Mammary epithelial cell (primary cell): ENCODE measurements at regions of chr6 and their contacts with region 1.

Region 1: GRCh38 chr6:34132486-34133185 is 13.3 kb downstream of the GRM4 start:
- DNase-seq: peak; percentile 23
- H3K4me3 ChIP-seq: no peak overlapping the region
- H3K27ac ChIP-seq: no peak overlapping the region
- H3K4me1 ChIP-seq: no peaks in the 10 kb centered on the region
- H3K27me3 ChIP-seq: no peaks in the 10 kb centered on the region
- CTCF ChIP-seq: no peak

Region 2: GRCh38 chr6:33720994-33721393 is 411.6 kb before region 1 on chr6:
- CTCF ChIA-PET with region 1: no interaction called
- dilution Hi-C with region 1: no loop called
- in situ Hi-C with region 1: no loop called
- intact Hi-C with region 1: no loop called
- DNase-seq: no peak
- H3K4me3 ChIP-seq: no peak overlapping the region
- H3K27ac ChIP-seq: no peak overlapping the region
- H3K4me1 ChIP-seq: peaks cover 24% of the 10 kb centered on the region
- H3K27me3 ChIP-seq: peaks cover 1% of the 10 kb centered on the region
- CTCF ChIP-seq: no peak

Region 3: GRCh38 chr6:33788694-33789549 is 343.7 kb before region 1 on chr6 and contains the start of gene LEMD2:
- CTCF ChIA-PET with region 1: no interaction called
- dilution Hi-C with region 1: no loop called
- in situ Hi-C with region 1: no loop called
- intact Hi-C with region 1: loop called (anchors 5 kb)
- DNase-seq: peak; percentile 88
- H3K4me3 ChIP-seq: peak within 1 kb of the TSS; percentile 71 to 79 (median 76)
- H3K27ac ChIP-seq: peak within 1 kb of the TSS; percentile 73
- H3K4me1 ChIP-seq: peaks cover 25% of the 10 kb centered on the region
- H3K27me3 ChIP-seq: no peaks in the 10 kb centered on the region
- CTCF ChIP-seq: no peak
- total RNA-seq, gene LEMD2: 47.5 to 63.2 TPM

Region 4: GRCh38 chr6:34094474-34095135 is 38.0 kb before region 1 on chr6:
- CTCF ChIA-PET with region 1: no interaction called
- dilution Hi-C with region 1: loop called (anchors 5 kb)
- in situ Hi-C with region 1: no loop called
- intact Hi-C with region 1: no loop called
- DNase-seq: no peak
- H3K4me3 ChIP-seq: no peak overlapping the region
- H3K27ac ChIP-seq: no peak overlapping the region
- H3K4me1 ChIP-seq: no peaks in the 10 kb centered on the region
- H3K27me3 ChIP-seq: no peaks in the 10 kb centered on the region
- CTCF ChIP-seq: no peak

Region 5: DNA sequence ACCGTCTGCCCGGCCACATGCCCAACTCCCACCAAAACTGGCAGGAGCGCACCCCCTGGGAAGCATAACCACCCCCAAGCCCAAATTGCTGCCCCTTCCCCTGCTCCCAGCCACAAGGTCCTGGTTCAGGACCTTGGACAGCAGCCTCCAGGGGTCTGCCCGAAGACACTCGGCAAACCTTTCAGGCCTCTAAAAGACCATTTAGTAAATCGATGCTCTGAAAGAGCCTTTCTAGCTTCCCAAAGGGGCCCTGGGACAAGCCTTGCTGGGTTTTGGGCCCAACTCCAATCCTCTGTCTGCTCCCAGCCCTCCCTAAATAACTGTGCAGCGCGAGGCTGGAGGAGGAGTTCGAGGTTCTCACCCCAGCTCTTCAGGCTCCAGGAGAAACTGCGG is 17.2 kb before region 1 on chr6:
- CTCF ChIA-PET with region 1: no interaction called
- dilution Hi-C with region 1: no loop called
- in situ Hi-C with region 1: no loop called
- intact Hi-C with region 1: loop called (anchors 2 kb)
- DNase-seq: no peak
- H3K4me3 ChIP-seq: no peak overlapping the region
- H3K27ac ChIP-seq: no peak overlapping the region
- H3K4me1 ChIP-seq: no peaks in the 10 kb centered on the region
- H3K27me3 ChIP-seq: peaks cover 4% of the 10 kb centered on the region
- CTCF ChIP-seq: no peak

Region 6: DNA sequence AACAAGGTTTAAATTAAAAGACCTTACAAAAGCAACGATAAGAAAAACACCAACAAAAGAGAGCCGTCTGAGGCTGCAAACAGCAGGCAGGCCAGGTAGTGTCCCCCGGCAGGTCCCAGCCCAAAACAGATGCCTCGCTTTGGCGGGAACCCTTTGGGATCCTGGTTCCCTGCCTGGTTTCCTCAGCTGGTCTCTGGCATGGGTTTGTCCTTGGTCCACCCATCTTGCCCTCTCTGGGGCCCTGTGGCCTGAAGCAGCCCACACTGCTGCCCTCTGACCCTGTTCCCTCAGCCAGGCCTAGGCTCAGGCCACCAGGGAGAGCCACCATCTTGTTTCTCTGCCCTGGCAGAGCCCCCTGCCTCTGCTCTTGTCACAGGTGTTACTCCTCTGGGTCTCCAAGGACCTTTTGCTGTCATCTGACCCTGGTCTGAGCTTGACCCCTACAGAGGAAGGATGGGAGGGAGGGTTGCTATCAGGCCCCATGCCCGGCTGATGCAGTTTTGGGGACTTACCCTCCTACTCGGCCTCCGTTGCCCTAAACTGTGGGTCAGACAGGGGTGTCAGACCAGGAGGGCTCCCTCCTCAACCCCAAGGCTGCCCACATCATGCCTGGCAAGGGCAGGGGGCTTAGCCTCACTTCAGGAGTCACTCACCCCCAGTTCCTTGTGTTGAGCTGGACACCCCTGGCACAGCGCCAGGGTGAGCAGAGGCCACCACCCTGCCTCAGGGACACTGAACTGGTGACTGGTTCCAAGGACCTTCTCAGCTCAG is 43.8 kb after region 1 on chr6:
- CTCF ChIA-PET with region 1: no interaction called
- dilution Hi-C with region 1: loop called (anchors 5 kb)
- in situ Hi-C with region 1: no loop called
- intact Hi-C with region 1: no loop called
- DNase-seq: no peak
- H3K4me3 ChIP-seq: no peak overlapping the region
- H3K27ac ChIP-seq: no peak overlapping the region
- H3K4me1 ChIP-seq: peaks cover 8% of the 10 kb centered on the region
- H3K27me3 ChIP-seq: no peaks in the 10 kb centered on the region
- CTCF ChIP-seq: no peak